ENCODE measurements at regions of chr10 and their contacts with region 1.

Region 1: DNA sequence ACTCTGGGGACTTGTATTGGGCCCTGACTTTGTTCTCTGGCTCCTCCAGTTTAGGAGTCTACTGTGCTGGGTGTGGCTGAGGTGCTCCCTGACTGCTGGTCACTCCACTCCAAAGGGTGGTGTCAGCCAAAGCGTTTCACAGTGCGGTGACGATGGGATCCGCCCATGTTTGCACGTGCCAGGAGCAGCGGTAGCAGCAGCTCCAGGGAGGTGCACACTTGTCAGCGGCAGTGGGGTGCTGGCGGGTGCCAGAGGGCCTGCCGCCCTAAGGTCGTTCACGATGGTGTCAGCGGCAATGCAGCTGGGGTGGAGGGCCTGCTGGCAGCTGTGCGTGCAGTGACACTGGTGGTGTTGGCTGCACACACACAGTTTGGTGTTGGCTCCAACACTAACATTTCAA is 268.5 kb upstream of the AKR1E2 start:
- DNase-seq: no peak
- H3K4me3 ChIP-seq: no peak overlapping the region
- H3K27ac ChIP-seq: no peak overlapping the region
- H3K4me1 ChIP-seq: no peaks in the 10 kb centered on the region
- H3K27me3 ChIP-seq: no peaks in the 10 kb centered on the region
- CTCF ChIP-seq: no peak
- POLR2A ChIP-seq: no peak

Region 2: DNA sequence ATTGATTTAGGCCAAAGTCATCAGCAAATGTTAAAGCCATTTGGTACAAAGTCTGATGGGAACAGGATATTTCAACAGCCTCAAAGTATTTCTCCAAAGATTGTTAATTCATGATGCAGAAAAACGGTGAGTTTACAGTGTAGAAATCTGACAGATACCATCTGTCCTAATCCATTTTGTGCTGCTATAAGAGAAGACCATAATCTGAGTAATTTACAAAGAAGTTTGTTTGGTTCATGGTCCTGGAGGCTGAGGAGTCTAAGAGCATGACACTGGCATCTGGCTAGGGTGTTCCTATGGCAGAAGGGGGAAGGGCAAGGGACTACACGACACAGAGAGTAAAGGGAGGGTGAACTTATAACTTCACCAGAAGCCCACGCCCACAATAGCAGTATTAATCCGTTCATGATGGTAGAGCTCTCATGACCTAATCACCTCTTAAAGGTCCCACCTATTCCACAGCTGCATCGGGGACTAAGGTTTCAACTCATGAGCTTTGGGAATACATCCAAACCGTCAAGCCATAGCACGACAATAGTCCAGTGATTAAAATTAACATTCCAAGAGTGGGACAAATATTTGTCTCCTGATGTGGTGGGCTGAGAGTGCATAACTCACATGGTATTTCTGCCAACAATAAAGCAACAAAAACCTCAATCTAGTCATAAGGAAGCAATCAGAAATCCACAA is 30.0 kb before region 1 on chr10:
- intact Hi-C with region 1: loop called (anchors 2 kb)
- DNase-seq: no peak
- H3K4me3 ChIP-seq: no peak overlapping the region
- H3K27ac ChIP-seq: peak overlapping the region in 1 of 2 donors; percentile 63
- H3K4me1 ChIP-seq: no peaks in the 10 kb centered on the region
- H3K27me3 ChIP-seq: no peaks in the 10 kb centered on the region
- CTCF ChIP-seq: no peak
- POLR2A ChIP-seq: no peak

Region 3: DNA sequence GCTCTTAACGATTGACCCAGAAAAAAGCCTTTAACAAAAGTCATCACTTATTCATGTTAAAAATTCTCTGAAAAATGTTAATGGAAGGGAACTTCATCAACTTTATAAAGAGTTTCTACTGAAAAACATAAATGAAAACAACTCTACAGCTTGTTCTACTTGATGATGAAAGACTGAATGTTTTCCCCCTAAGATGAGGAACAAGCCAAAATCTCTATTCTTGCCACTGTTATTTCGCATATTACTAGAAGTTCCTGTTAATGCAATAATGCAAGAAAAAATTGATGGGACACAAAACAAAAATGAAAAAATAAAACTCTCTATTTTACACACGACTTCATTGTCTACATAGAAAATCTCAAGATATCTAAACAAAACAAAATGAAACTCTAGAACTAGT is 18.7 kb after region 1 on chr10:
- intact Hi-C with region 1: no loop called
- DNase-seq: no peak
- H3K4me3 ChIP-seq: no peak overlapping the region
- H3K27ac ChIP-seq: no peak overlapping the region
- H3K4me1 ChIP-seq: no peaks in the 10 kb centered on the region
- H3K27me3 ChIP-seq: no peaks in the 10 kb centered on the region
- CTCF ChIP-seq: no peak
- POLR2A ChIP-seq: no peak

Region 4: GRCh38 chr10:4835494-4835918 is 278.0 kb after region 1 on chr10:
- intact Hi-C with region 1: no loop called
- DNase-seq: no peak
- H3K4me3 ChIP-seq: no peak overlapping the region
- H3K27ac ChIP-seq: no peak overlapping the region
- H3K4me1 ChIP-seq: no peaks in the 10 kb centered on the region
- H3K27me3 ChIP-seq: no peaks in the 10 kb centered on the region
- CTCF ChIP-seq: no peak
- POLR2A ChIP-seq: no peak